Heart left ventricle (tissue), 16 donors: ENCODE measurements at regions of chr18 and their contacts with region 1.

Region 1: DNA sequence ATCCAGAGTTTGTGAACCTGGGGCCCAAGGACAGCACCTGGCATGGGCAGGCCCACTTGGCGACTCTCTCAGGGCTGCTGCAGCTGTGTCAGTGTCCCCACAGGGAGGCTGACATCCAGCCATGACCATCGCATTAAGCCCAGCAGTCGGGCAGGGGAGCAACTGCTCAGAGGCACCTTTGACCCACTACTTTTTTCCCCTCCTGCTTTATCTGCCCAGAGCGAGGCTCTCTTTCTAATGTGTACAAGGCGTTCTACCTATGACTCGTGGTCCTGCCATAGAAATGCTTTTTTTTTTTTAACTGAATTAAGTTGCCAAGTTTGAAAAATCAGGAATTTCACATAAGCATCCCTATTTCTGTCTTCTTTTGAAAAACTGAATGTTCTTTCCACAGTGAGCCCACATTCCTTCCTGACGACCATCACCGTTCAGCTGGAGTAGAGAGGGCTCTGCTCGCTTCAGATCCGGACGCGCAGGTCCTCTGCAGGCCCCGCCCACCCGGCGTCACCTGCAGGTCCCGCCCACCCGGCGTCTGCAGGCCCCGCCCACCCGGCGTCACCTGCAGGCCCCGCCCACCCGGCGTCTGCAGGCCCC is 403 bp upstream of the CLUL1 start:
- DNase-seq: no peak
- ATAC-seq: peak in 1 of 4 donors; percentile 38
- H3K4me3 ChIP-seq: no peak overlapping the region
- H3K27ac ChIP-seq: no peak overlapping the region
- H3K4me1 ChIP-seq: peaks cover 0 to 7% (median 0%) of the 10 kb centered on the region in 12 donors
- H3K27me3 ChIP-seq: peaks cover 0 to 45% (median 12%) of the 10 kb centered on the region in 9 donors
- CTCF ChIP-seq: no peak
- POLR2A ChIP-seq: no peak

Region 2: GRCh38 chr18:267688-268552 is 328.5 kb before region 1 on chr18 and contains the start of gene THOC1:
- intact Hi-C with region 1: loop called in 1 of 10 experiments (anchors 5 kb)
- DNase-seq: peak; percentile 93 to 96 (median 95)
- ATAC-seq: peak; percentile 97 to 99 (median 98)
- H3K4me3 ChIP-seq: peak within 1 kb of the TSS; percentile 65 to 100 (median 90)
- H3K27ac ChIP-seq: peak within 1 kb of the TSS; percentile 78 to 96 (median 90)
- H3K4me1 ChIP-seq: peaks cover 0 to 24% (median 16%) of the 10 kb centered on the region in 12 donors
- H3K27me3 ChIP-seq: no peaks in the 10 kb centered on the region
- CTCF ChIP-seq: no peak
- POLR2A ChIP-seq: peak in 1 of 2 donors; percentile 76
- total RNA-seq, gene THOC1: 6.4 to 17.7 (median 9.6) TPM

Region 3: GRCh38 chr18:499551-500408 is 96.6 kb before region 1 on chr18:
- intact Hi-C with region 1: no loop called
- DNase-seq: peak in 1 of 5 donors; percentile 36
- ATAC-seq: peak in 3 of 4 donors; percentile 16 to 40 (median 38)
- H3K4me3 ChIP-seq: peak overlapping the region; percentile 28 to 66 (median 55)
- H3K27ac ChIP-seq: peak overlapping the region in 7 of 12 donors; percentile 43 to 62 (median 54)
- H3K4me1 ChIP-seq: peaks cover 0 to 39% (median 9%) of the 10 kb centered on the region in 12 donors
- H3K27me3 ChIP-seq: peaks cover 3 to 46% (median 25%) of the 10 kb centered on the region in 9 donors
- CTCF ChIP-seq: peak in 3 of 12 donors; percentile 5 to 26 (median 24)
- POLR2A ChIP-seq: no peak

Region 4: DNA sequence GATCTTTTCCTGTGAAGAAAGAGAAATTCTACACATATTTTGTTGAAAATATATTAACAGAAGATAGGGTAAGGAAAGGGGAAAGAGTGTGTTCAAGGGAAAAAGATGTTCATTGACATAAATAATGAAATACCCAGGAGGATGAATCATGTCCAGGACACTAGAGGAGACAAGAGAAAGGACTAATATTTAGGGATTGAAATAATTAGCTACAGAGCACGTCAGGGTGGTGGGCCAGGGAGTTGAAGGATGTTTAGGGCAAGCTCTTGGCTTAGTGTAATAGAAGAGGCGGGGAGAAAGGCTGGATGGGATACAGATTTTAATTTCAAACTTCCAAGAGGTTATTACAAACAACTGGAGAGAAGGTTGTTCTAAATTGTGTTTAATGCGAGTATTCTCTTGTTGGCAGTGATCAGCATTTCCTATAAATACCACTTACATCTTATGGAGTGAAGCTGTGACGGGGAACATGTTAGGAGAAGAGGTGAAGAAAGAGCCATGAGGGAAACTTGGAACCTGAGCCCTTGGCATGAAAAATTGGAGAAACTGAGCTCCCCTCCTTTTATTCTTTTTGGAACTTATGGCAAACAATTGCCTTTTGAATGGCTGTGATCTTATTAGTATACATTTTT is 52.8 kb before region 1 on chr18:
- intact Hi-C with region 1: loop called in 1 of 10 experiments (anchors 10 kb)
- DNase-seq: no peak
- ATAC-seq: no peak
- H3K4me3 ChIP-seq: no peak overlapping the region
- H3K27ac ChIP-seq: no peak overlapping the region
- H3K4me1 ChIP-seq: peaks cover 0 to 5% (median 0%) of the 10 kb centered on the region in 12 donors
- H3K27me3 ChIP-seq: no peaks in the 10 kb centered on the region
- CTCF ChIP-seq: no peak
- POLR2A ChIP-seq: no peak

Region 5: GRCh38 chr18:744832-745597 is 148.6 kb after region 1 on chr18:
- intact Hi-C with region 1: no loop called
- DNase-seq: no peak
- ATAC-seq: no peak
- H3K4me3 ChIP-seq: no peak overlapping the region
- H3K27ac ChIP-seq: no peak overlapping the region
- H3K4me1 ChIP-seq: peaks cover 0 to 4% (median 0%) of the 10 kb centered on the region in 12 donors
- H3K27me3 ChIP-seq: no peaks in the 10 kb centered on the region
- CTCF ChIP-seq: no peak
- POLR2A ChIP-seq: no peak